ENCODE measurements at regions of chr9 and their contacts with region 1.

Region 1: GRCh38 chr9:19127881-19128500 is 699 bp upstream of the PLIN2 start:
- DNase-seq: no peak
- ATAC-seq: peak; percentile 7
- H3K4me3 ChIP-seq: peak overlapping the region; percentile 73 to 89 (median 81); a peak in 4 of 6 replicates
- H3K27ac ChIP-seq: peak overlapping the region; percentile 92
- H3K4me1 ChIP-seq: peaks cover 81% of the 10 kb centered on the region
- H3K27me3 ChIP-seq: peaks cover 0 to 5% of the 10 kb centered on the region in 2 experiments; a peak in 1 of 5 replicates
- CTCF ChIP-seq: no peak
- EP300 ChIP-seq: no peak
- POLR2A ChIP-seq: no peak
- RAD21 ChIP-seq: no peak

Region 2: GRCh38 chr9:19161257-19162025 is 33.5 kb after region 1 on chr9:
- CTCF ChIA-PET with region 1: no interaction called
- POLR2A ChIA-PET with region 1: interaction called, 10 read pairs
- in situ Hi-C with region 1: no loop called
- intact Hi-C with region 1: no loop called
- DNase-seq: peak; percentile 100
- ATAC-seq: peak; percentile 88
- H3K4me3 ChIP-seq: peak overlapping the region in 1 of 3 experiments; percentile 18; a peak in 1 of 6 replicates
- H3K27ac ChIP-seq: peak overlapping the region; percentile 99
- H3K4me1 ChIP-seq: peaks cover 90% of the 10 kb centered on the region
- H3K27me3 ChIP-seq: no peaks in the 10 kb centered on the region
- CTCF ChIP-seq: no peak
- EP300 ChIP-seq: peak; percentile 99
- POLR2A ChIP-seq: peak; percentile 46 to 56; a peak in 3 of 4 replicates
- RAD21 ChIP-seq: peak; percentile 43